ENCODE measurements at regions of chr2 and their contacts with region 1.

Region 1: DNA sequence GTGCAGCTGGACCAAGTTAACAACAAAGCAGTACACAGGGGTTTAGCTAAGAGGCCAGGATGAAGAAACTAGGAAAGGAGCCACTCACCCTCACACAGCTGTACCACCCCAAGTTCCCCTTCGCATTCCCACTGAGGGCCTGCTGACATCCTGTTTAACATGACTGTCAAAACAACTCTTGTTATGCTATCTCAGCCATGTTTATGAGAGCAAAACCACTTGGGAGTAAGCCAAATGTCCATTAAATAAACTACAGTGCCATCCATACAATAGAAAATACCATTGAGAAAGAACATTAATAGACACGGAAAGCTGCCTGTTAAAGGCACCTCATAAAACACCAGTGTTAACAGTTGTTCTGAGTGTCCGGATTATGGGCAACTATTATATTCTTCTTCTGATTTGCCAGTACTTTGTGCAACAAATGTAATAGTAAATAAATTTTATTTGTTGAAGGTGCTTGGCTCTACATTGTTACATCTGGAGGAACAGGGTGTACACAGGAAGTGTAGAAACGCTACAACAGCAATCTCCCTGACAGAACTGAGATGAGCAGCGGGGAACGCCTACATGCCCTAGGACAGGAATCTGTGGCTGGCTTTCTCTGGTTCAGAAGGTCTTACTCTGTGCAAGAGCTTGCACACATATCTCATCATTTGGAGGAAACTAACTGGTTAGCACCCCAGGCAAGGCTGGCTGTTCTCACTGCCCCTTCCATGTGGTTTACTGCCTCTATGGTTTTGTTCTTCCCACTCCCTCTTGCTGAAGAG is 85.6 kb downstream of the EHD3 start:
- DNase-seq: no peak
- ATAC-seq: peak; percentile 71 to 81
- H3K4me3 ChIP-seq: no peak overlapping the region
- H3K27ac ChIP-seq: no peak overlapping the region
- H3K4me1 ChIP-seq: peaks cover 2% of the 10 kb centered on the region
- H3K27me3 ChIP-seq: no peaks in the 10 kb centered on the region

Region 2: GRCh38 chr2:31239593-31240177 is 79.9 kb before region 1 on chr2:
- intact Hi-C with region 1: loop called in 1 of 4 experiments (anchors 10 kb)
- DNase-seq: peak; percentile 53 to 82 (median 78)
- ATAC-seq: peak; percentile 91 to 92
- H3K4me3 ChIP-seq: no peak overlapping the region
- H3K27ac ChIP-seq: peak overlapping the region; percentile 79
- H3K4me1 ChIP-seq: peaks cover 17% of the 10 kb centered on the region
- H3K27me3 ChIP-seq: no peaks in the 10 kb centered on the region